Ascending aorta (tissue), 2 donors: ENCODE measurements at regions of chr7 and their contacts with region 1.

Region 1: GRCh38 chr7:99616359-99617191 is at the start of gene ZSCAN25:
- DNase-seq: peak; percentile 46 to 91
- H3K4me3 ChIP-seq: peak within 1 kb of the TSS; percentile 94 to 95
- H3K27ac ChIP-seq: peak within 1 kb of the TSS; percentile 87 to 88
- H3K4me1 ChIP-seq: peaks cover 0 to 6% of the 10 kb centered on the region in 2 donors
- H3K27me3 ChIP-seq: no peaks in the 10 kb centered on the region
- CTCF ChIP-seq: peak in 2 of 3 experiments; percentile 29 to 31
- total RNA-seq, gene ZSCAN25: 10.3 TPM

Region 2: DNA sequence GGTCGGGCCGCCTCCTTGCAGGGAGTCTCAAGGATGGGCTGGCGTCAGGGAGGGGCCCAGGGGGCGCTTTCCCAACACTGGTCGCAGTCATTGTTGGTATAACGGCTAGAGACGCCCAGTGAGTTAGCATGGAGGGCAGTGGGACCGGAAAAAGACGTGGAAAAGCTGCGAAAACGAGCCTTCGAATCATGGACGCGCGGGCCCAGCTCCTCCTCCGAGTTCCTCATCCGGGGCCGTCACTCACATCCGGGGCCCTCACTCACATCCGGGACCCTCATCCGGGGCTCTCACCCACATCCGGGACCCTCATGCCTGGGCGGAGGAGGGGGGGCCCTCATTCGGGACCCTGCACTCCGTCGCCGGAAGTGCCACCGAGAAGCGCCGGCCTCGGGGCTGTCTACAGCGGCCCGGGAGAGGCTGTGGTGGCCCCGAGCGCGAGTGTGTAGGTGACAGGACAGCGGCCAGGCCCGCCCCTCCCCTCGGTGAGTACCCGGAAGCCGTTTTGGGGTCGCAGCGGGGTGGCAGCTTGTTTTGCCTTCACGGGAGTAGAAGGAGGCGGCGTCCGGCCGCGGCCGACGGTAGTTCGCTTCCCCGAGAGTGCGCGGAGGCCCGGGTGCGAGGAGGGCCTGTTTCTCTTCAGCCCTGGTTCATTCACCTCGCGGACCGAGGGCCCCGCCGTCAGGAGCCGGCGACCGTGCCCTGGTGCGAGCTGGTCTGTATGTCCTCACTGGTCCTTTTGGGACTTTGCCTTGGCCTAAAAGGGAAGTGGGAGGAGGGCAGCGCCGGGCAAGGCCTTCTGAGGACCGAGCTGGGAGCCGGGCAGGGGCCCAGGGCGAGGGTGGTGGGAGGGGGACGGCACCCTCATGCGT is 58.0 kb before region 1 on chr7 and contains the start of gene ZNF655:
- intact Hi-C with region 1: loop called (anchors 2 kb)
- DNase-seq: peak; percentile 75 to 97
- H3K4me3 ChIP-seq: peak within 1 kb of the TSS; percentile 62 to 85
- H3K27ac ChIP-seq: peak within 1 kb of the TSS; percentile 96 to 98
- H3K4me1 ChIP-seq: peaks cover 3 to 15% of the 10 kb centered on the region in 2 donors
- H3K27me3 ChIP-seq: no peaks in the 10 kb centered on the region
- CTCF ChIP-seq: no peak
- total RNA-seq, gene ZNF655: 37.9 TPM